Activated CD4-positive, alpha-beta T cell treated with anti-CD3 and anti-CD28 coated beads, Interleukin-2, amount 10 ng/mL, durations not matched to agents 24 days and 14 days (primary cell): ENCODE measurements at regions of chr2 and their contacts with region 1.

Region 1: DNA sequence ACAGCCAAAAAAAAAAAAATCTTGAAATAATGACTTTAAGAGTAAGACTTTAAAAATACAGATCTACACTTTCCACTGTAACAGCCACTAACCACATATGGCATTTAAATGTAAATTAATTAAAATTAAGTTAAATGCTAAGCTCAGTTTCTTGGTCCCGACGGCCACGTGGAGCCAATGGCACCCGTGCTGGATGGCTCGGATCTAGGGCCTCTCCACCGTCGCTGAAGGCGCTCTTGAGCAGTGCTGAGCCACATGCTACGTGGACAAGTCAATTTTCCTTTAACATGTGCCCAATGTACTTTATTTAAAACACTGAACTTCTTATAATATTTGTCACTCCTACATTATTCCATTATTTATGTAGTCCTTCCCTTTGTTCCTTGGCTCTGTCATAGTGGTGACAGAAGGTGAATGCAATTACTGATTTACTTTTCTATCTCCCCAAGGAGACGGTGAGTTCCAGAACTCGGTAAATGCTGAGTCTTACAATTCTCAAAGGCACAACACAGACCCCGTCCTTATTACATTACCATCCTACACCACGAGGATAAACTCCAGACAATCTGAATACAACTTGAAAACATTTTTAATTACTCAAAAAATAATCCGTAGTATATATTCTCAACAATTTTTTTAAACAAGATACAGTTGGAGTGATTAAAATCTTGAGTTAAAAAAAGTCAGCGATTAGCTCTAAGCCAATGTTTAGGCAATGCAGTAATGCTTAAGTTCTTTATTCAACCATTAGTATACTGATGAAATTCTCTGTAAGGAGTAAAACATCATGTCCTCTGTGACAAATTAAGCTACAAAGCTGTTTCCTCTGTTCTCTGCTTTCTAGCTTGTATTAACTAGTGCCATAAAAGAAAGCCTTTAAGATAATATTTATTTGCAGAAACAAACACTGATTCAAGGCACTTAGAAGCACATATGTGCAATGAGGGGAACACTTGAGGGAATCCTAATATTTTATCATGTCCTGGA is 95.1 kb downstream of the AFF3 start:
- DNase-seq: no peak
- H3K4me3 Mint-ChIP-seq: no peak overlapping the region
- H3K27ac Mint-ChIP-seq: no peak overlapping the region
- H3K4me1 Mint-ChIP-seq: no peaks in the 10 kb centered on the region
- H3K27me3 Mint-ChIP-seq: no peaks in the 10 kb centered on the region

Region 2: DNA sequence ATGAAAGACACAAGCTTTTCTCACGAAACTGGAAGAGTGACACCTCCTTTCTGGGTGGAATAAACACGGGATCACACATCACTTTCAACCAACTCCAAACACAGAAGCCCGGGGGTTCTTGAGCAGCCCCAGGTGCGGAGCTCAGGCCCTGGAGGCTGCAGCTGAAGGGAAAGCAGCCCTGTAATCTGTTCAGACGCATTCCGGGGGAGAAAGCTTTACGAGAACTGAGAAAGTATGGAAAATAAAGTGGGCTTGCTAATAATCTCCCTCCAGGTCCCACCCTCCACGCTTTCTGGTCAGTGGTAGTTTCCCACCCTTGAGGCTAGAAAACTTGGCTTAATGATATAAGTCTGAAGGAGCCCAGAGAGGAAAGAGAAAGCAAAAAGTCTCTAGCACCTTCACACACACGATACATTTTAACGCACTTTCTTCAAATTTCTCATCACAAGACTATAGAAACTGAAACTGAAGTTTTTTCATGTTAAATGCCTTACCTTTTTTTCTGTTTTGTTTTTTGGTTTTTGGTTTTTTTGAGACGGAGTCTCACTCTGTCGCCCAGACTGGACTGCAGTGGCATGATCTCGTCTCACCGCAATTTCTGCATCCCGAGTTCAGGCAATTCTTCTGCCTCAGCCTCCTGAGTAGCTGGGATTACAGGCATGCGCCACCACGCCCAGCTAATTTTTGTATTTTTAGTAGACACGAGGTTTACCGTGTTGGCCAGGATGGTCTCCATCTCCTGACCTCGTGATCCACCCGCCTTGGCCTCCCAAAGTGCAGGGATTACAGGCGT is 46.1 kb before region 1 on chr2:
- intact Hi-C with region 1: loop called (anchors 5 kb)
- DNase-seq: peak; percentile 59
- H3K4me3 Mint-ChIP-seq: peak overlapping the region; percentile 40
- H3K27ac Mint-ChIP-seq: peak overlapping the region; percentile 14
- H3K4me1 Mint-ChIP-seq: peaks cover 6% of the 10 kb centered on the region
- H3K27me3 Mint-ChIP-seq: no peaks in the 10 kb centered on the region